ENCODE measurements at regions of chr16 and their contacts with region 1.

Region 1: GRCh38 chr16:1705688-1706385 is at the start of gene MAPK8IP3:
- DNase-seq: peak; percentile 89 to 97 (median 93)
- ATAC-seq: peak; percentile 65 to 93 (median 89)
- H3K4me3 ChIP-seq: peak within 1 kb of the TSS; percentile 74 to 99 (median 92)
- H3K27ac ChIP-seq: peak within 1 kb of the TSS; percentile 69 to 99 (median 94)
- H3K4me1 ChIP-seq: peaks cover 0 to 46% (median 32%) of the 10 kb centered on the region in 12 donors
- H3K27me3 ChIP-seq: no peaks in the 10 kb centered on the region
- CTCF ChIP-seq: peak; percentile 79 to 100 (median 97)
- POLR2A ChIP-seq: peak; percentile 77 to 98
- total RNA-seq, gene MAPK8IP3: 29.5 to 71.3 (median 63.1) TPM

Region 2: GRCh38 chr16:1420111-1420540 is 285.7 kb before region 1 on chr16:
- intact Hi-C with region 1: loop called in 2 of 10 experiments (anchors 5 kb)
- DNase-seq: peak in 2 of 5 donors; percentile 39 to 45
- ATAC-seq: peak in 2 of 4 donors; percentile 1 to 2
- H3K4me3 ChIP-seq: peak overlapping the region; percentile 61 to 98 (median 88)
- H3K27ac ChIP-seq: peak overlapping the region in 11 of 12 donors; percentile 61 to 99 (median 98)
- H3K4me1 ChIP-seq: peaks cover 4 to 26% (median 18%) of the 10 kb centered on the region in 12 donors
- H3K27me3 ChIP-seq: no peaks in the 10 kb centered on the region
- CTCF ChIP-seq: no peak
- POLR2A ChIP-seq: no peak

Region 3: DNA sequence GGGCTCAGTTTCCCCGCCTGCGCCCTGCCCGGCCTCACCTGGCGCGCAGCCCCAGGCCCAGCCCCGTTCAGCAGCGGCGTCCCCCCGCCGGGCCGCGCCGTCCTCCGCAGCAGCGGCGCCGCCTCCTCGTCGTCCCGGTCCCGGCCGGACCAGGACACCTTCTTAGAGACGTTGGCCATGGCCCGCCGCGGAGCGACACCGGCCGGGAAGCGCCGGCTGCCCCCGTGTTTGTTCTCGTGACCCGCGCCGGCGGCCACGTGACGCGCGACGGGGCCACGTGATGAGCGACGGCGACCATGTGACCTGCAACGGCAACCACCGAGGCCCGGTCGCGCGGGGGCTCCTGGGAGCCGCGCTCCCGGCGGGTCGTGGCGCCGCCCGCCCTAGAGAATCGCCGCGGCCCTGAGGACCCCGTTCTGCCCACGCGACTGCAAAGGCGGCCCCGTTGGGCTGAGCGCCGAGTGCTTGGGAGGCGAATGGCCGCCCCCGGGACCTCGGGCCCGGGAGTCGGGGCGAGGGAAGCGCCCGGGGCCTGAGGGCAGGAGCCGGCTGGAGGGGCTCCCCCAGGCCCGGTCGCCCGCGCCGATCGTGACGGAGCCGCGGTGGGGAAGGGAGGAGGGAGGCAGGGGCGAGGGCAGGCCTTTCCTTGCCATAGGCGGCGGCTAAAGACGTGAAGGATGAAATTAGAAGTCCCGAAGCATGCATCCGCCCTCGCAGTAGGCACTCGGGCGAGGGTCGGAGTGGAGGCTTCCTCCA is 230.9 kb before region 1 on chr16 and contains the start of gene CLCN7:
- intact Hi-C with region 1: loop called in 1 of 10 experiments (anchors 5 kb)
- DNase-seq: peak; percentile 92 to 96 (median 93)
- ATAC-seq: peak; percentile 85 to 97 (median 96)
- H3K4me3 ChIP-seq: peak within 1 kb of the TSS; percentile 68 to 99 (median 87)
- H3K27ac ChIP-seq: peak within 1 kb of the TSS; percentile 79 to 98 (median 92)
- H3K4me1 ChIP-seq: peaks cover 0 to 51% (median 19%) of the 10 kb centered on the region in 12 donors
- H3K27me3 ChIP-seq: no peaks in the 10 kb centered on the region
- CTCF ChIP-seq: peak in 1 of 12 donors; percentile 20
- POLR2A ChIP-seq: peak in 1 of 2 donors; percentile 93
- total RNA-seq, gene CLCN7: 30.3 to 70.8 (median 33.6) TPM

Region 4: DNA sequence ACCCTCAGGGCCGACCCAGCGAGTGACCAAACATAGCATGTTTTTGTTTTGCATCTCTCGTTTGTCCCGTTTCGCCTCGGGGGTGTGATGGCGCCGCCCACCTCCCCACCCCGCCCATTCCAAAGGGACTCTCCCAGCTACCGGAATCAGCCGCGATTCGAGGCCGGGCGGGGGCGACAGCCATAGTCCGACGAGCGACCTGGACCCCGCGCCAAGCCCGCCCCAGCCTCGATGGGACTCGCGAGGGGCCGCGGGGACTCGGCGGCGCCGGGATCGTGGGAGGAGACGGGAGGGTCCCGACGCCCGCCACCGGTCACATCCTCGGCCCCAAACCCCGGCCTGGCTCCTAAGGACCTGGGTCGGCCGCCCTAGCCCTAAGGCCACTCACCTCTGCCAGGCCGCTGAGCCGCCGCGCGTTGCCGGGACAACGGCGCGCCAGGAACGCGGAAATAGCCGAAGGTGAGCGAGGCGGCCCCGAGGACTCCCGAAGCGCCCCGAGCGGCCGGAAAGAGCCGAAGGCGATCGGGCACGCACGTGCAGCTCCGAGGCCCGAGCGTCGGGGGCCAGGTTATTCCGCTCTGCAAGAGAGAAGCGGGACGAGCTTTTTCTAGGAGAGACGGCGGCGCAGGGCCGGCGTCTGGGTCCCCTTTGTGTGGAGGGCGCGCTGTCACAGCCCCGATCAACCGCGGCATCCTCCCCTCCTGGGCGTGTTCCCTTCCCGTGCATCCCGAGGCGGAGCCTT is 95.4 kb before region 1 on chr16:
- intact Hi-C with region 1: loop called in 4 of 10 experiments (anchors 1 to 10 kb)
- DNase-seq: peak; percentile 85 to 95 (median 90)
- ATAC-seq: peak; percentile 48 to 77 (median 74)
- H3K4me3 ChIP-seq: peak overlapping the region; percentile 25 to 96 (median 72)
- H3K27ac ChIP-seq: peak overlapping the region; percentile 58 to 92 (median 82)
- H3K4me1 ChIP-seq: peaks cover 5 to 46% (median 33%) of the 10 kb centered on the region in 12 donors
- H3K27me3 ChIP-seq: no peaks in the 10 kb centered on the region
- CTCF ChIP-seq: no peak
- POLR2A ChIP-seq: peak in 1 of 2 donors; percentile 27

Region 5: DNA sequence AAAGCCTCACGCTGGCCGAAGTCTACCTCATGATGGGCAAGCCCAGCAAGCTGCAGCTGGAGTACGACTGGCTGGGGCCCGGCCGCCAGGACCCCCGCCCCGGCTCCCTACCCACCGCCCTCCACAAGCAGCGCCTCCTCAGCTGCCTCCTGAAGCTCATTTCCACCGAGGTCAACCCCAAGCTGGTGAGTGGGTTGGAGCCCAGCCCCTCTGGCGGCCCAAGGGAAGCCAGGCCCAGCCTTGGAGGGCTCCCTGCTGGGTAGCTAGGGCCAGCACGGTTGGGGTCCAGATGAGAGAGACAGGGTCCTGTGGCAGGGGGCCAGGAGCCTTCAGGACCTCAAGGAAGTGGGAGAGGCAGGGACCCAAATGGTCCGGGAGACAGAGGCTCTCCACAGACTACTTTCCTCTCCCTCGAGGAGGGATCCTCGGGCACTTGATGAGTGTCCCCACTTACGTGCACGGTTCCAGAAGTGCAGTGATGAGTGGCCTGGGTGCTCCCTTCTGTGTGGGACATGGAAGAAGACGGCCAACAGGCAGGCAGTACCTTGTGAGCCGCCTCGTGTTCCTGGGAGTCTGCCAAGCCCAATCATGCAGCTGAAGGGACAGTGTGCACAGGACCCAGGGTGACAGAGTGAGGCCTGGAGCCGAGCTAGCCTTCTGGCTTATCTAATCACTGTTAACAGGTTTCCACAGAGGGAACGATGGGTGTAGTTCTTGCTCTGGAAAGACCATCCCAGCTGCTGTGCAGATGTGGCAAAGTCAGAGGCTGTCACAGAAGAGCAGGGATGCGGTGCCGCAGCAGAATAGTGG is 48.8 kb before region 1 on chr16:
- intact Hi-C with region 1: no loop called
- DNase-seq: peak; percentile 72 to 89 (median 79)
- ATAC-seq: peak; percentile 91 to 95 (median 94)
- H3K4me3 ChIP-seq: no peak overlapping the region
- H3K27ac ChIP-seq: peak overlapping the region in 7 of 12 donors; percentile 4 to 78 (median 29)
- H3K4me1 ChIP-seq: peaks cover 0 to 17% (median 5%) of the 10 kb centered on the region in 12 donors
- H3K27me3 ChIP-seq: no peaks in the 10 kb centered on the region
- CTCF ChIP-seq: no peak
- POLR2A ChIP-seq: no peak

Region 6: GRCh38 chr16:1677802-1678496 is 27.9 kb before region 1 on chr16 and contains the start of gene JPT2:
- intact Hi-C with region 1: loop called in 1 of 10 experiments (anchors 2 kb)
- DNase-seq: peak; percentile 97 to 99 (median 98)
- ATAC-seq: peak; percentile 95 to 99 (median 98)
- H3K4me3 ChIP-seq: peak within 1 kb of the TSS; percentile 61 to 98 (median 77)
- H3K27ac ChIP-seq: peak within 1 kb of the TSS in 11 of 12 donors; percentile 17 to 81 (median 71)
- H3K4me1 ChIP-seq: peaks cover 0 to 16% (median 9%) of the 10 kb centered on the region in 12 donors
- H3K27me3 ChIP-seq: no peaks in the 10 kb centered on the region
- CTCF ChIP-seq: no peak
- POLR2A ChIP-seq: peak in 1 of 2 donors; percentile 66
- total RNA-seq, gene JPT2: 11.7 to 50.4 (median 34.1) TPM

Region 7: GRCh38 chr16:1763521-1764511 is 58.0 kb after region 1 on chr16:
- intact Hi-C with region 1: no loop called
- DNase-seq: no peak
- ATAC-seq: peak in 1 of 4 donors; percentile 7
- H3K4me3 ChIP-seq: no peak overlapping the region
- H3K27ac ChIP-seq: no peak overlapping the region
- H3K4me1 ChIP-seq: no peaks in the 10 kb centered on the region
- H3K27me3 ChIP-seq: no peaks in the 10 kb centered on the region
- CTCF ChIP-seq: peak in 9 of 12 donors; percentile 11 to 47 (median 30)
- POLR2A ChIP-seq: no peak

Region 8: GRCh38 chr16:1929578-1930337 is 223.9 kb after region 1 on chr16:
- intact Hi-C with region 1: loop called in 1 of 10 experiments (anchors 5 kb)
- DNase-seq: peak; percentile 90 to 97 (median 91)
- ATAC-seq: peak; percentile 75 to 95 (median 91)
- H3K4me3 ChIP-seq: peak overlapping the region; percentile 37 to 74 (median 64)
- H3K27ac ChIP-seq: peak overlapping the region; percentile 36 to 85 (median 76)
- H3K4me1 ChIP-seq: peaks cover 0 to 12% (median 7%) of the 10 kb centered on the region in 12 donors
- H3K27me3 ChIP-seq: peaks cover 0 to 5% (median 0%) of the 10 kb centered on the region in 9 donors
- CTCF ChIP-seq: peak; percentile 83 to 100 (median 98)
- POLR2A ChIP-seq: peak in 1 of 2 donors; percentile 50